Activated CD8-positive, alpha-beta T cell treated with anti-CD3 and anti-CD28 coated beads for 36 hours (primary cell): ENCODE measurements at regions of chr17 and their contacts with region 1.

Region 1: DNA sequence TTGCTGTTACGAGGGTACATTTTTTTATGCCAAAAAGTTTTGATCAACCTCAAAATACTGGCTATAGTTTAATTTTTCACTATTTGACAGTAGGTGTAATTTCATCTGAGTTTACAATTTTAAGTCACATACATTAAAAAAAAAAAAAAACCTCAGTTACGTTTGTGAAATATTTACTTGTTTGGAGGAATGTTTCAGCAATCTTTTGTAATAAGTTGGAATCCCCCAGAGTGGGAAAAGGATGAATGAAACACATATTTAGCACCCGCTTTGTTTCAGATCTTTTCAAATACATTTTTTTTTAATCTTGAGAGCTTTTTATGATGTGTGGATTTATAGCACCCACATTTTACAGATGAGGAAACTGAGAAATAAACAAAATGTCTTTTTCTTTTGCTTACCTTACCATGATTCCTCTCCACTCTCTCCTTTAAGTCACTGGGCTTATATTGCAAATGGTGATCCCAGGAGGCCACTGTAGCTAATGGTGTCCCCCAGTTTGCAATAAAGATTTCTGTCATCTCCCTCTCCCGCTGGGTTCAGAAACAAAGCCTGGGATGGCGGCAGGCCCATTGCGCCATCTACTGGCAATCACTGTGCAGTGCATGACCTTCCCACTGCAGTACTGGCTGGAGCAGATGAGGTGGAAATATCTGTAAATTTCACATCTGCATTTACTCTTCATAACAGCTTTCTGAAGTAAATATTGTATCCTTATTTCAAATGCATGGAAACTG is 27.7 kb downstream of the TBC1D3B start:
- DNase-seq: peak; percentile 76
- ATAC-seq: peak; percentile 97
- H3K4me3 Mint-ChIP-seq: peak overlapping the region; percentile 35
- H3K27ac Mint-ChIP-seq: no peak overlapping the region
- H3K4me1 Mint-ChIP-seq: peaks cover 37% of the 10 kb centered on the region
- H3K27me3 Mint-ChIP-seq: peaks cover 10% of the 10 kb centered on the region
- CTCF ChIP-seq: peak; percentile 100

Region 2: GRCh38 chr17:35596530-35597233 is 552.0 kb before region 1 on chr17:
- CTCF ChIA-PET with region 1: no interaction called
- POLR2A ChIA-PET with region 1: no interaction called
- intact Hi-C with region 1: no loop called
- DNase-seq: no peak
- ATAC-seq: no peak
- H3K4me3 Mint-ChIP-seq: no peak overlapping the region
- H3K27ac Mint-ChIP-seq: no peak overlapping the region
- H3K4me1 Mint-ChIP-seq: peaks cover 6% of the 10 kb centered on the region
- H3K27me3 Mint-ChIP-seq: no peaks in the 10 kb centered on the region
- CTCF ChIP-seq: no peak

Region 3: DNA sequence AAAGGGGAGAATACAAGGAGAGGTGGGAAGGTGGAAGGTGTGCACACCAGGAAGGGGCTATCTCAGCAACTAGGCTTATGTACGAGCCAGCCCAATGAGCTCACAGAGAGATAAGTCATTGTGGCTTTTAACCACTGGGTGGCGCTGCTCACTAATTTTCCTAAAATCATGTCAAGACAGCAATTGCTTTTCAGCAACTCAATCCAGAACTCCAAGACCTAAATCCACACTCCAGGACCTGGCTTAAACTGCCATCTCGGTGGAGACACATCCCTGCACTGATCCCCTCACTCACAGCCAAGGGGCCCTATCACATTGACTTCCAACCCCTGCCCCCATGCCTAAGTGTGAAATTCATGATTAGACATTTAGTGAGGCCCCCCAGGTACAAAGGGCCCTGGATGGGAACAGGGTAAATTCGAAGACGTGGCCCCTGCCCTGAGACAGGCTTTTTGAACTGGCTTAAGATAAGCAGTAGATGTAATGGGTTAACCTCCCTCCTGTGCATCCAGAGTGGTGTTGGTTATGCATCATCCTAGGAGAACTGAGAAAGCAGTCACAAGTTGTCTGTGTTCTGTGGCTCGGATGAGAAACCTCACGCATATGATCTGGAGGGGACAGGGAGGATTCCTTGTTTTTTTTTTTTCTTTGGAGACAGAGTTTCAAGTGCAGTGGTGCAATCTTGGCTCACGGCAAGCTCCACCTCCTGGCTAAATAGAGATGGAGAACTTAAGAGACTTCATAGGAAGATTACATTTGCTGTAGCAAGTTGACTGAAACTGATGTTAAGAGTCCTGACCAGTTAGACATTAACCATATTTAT is 179.0 kb before region 1 on chr17:
- CTCF ChIA-PET with region 1: interaction called, 299 read pairs
- POLR2A ChIA-PET with region 1: no interaction called
- intact Hi-C with region 1: loop called (anchors 2 kb)
- DNase-seq: peak; percentile 89
- ATAC-seq: peak; percentile 81
- H3K4me3 Mint-ChIP-seq: no peak overlapping the region
- H3K27ac Mint-ChIP-seq: no peak overlapping the region
- H3K4me1 Mint-ChIP-seq: no peaks in the 10 kb centered on the region
- H3K27me3 Mint-ChIP-seq: no peaks in the 10 kb centered on the region
- CTCF ChIP-seq: peak; percentile 85

Region 4: DNA sequence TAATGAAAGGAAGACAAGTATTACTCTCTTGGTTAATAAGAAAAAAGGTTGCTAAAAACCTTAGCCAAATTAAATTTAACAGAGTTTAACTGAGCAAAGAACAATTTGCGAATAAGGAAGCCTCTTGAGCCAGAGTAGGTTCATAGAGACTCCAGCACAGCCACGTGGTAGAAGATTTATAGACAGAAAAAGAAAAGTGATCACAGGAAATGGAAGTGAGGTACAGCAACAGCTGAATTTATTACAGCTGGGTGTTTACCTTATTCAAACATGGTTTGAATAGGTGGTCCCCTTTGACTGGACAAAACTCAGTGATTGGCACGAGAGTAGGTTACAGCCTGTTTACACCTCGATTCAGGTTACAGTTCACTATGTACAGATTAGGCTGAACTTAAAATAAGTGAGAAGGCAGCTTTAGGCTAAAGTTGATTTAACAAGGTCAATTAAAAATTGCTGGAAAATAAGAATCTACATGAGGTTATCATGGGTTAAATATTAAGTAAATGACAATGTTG is 144.1 kb before region 1 on chr17:
- CTCF ChIA-PET with region 1: interaction called, 11 read pairs
- POLR2A ChIA-PET with region 1: no interaction called
- intact Hi-C with region 1: no loop called
- DNase-seq: no peak
- ATAC-seq: no peak
- H3K4me3 Mint-ChIP-seq: no peak overlapping the region
- H3K27ac Mint-ChIP-seq: no peak overlapping the region
- H3K4me1 Mint-ChIP-seq: peaks cover 8% of the 10 kb centered on the region
- H3K27me3 Mint-ChIP-seq: no peaks in the 10 kb centered on the region
- CTCF ChIP-seq: no peak

Region 5: DNA sequence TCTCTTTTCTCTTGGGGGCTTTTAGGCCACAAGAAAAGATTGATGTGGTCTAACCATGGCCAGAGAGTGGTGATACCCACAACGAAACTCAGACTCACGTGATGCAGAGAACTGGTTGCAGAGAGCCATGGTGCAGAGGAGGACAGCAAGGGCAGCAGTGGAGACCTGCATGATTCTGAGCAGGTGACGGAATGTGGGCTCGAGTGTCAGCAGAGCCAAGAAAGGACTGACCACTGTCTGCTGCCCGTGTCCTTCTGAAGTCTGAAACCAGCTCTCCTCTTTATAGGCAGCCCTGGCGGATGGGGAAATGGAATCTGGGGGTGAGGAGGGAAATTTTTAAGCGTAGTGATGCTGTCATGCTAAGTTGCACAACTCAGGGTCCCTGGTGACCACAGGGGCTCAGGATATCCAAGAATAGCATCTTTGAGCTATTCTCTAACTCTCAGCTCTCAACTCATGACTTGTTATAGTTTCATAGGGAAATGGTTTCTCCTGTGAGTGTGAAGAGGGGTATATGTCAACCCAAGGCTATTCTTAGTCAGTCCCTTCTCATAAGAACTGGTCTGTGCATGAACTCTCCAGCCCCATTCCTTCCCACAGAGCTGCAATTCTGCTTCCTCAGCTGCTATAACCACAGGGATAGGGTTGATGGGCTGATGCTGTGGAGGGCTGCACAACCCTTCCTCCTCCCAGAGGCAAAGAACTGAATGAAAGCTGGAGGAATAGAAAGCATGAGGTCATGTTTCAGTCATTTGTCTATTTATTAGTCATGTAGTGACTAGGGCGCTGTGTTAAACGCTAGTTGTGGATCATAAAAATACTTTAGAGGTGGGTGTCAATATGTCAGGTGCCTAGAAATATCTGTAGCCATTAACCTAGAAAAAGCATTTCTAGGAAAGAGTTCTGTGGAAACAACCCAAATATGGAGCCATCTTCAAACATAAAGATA is 58.6 kb before region 1 on chr17 and contains the start of gene CCL3:
- CTCF ChIA-PET with region 1: interaction called, 5 read pairs
- POLR2A ChIA-PET with region 1: interaction called, 12 read pairs
- intact Hi-C with region 1: no loop called
- DNase-seq: peak; percentile 80
- ATAC-seq: peak; percentile 70
- H3K4me3 Mint-ChIP-seq: peak within 1 kb of the TSS; percentile 70
- H3K27ac Mint-ChIP-seq: peak within 1 kb of the TSS; percentile 95
- H3K4me1 Mint-ChIP-seq: peaks cover 66% of the 10 kb centered on the region
- H3K27me3 Mint-ChIP-seq: peaks cover 6% of the 10 kb centered on the region
- CTCF ChIP-seq: no peak
- total RNA-seq, gene CCL3: 230 to 253 TPM

Region 6: GRCh38 chr17:36111068-36111490 is 37.6 kb before region 1 on chr17:
- CTCF ChIA-PET with region 1: interaction called, 10 read pairs
- POLR2A ChIA-PET with region 1: no interaction called
- intact Hi-C with region 1: no loop called
- DNase-seq: no peak
- ATAC-seq: no peak
- H3K4me3 Mint-ChIP-seq: no peak overlapping the region
- H3K27ac Mint-ChIP-seq: no peak overlapping the region
- H3K4me1 Mint-ChIP-seq: peaks cover 15% of the 10 kb centered on the region
- H3K27me3 Mint-ChIP-seq: no peaks in the 10 kb centered on the region
- CTCF ChIP-seq: no peak

Region 7: GRCh38 chr17:36127199-36127893 is 21.4 kb before region 1 on chr17:
- CTCF ChIA-PET with region 1: interaction called, 24 read pairs
- POLR2A ChIA-PET with region 1: no interaction called
- intact Hi-C with region 1: no loop called
- DNase-seq: peak; percentile 18
- ATAC-seq: peak; percentile 56
- H3K4me3 Mint-ChIP-seq: no peak overlapping the region
- H3K27ac Mint-ChIP-seq: no peak overlapping the region
- H3K4me1 Mint-ChIP-seq: peaks cover 16% of the 10 kb centered on the region
- H3K27me3 Mint-ChIP-seq: peaks cover 2% of the 10 kb centered on the region
- CTCF ChIP-seq: no peak

Region 8: GRCh38 chr17:36212966-36213365 is 64.2 kb after region 1 on chr17:
- CTCF ChIA-PET with region 1: no interaction called
- POLR2A ChIA-PET with region 1: no interaction called
- intact Hi-C with region 1: no loop called
- DNase-seq: no peak
- ATAC-seq: no peak
- H3K4me3 Mint-ChIP-seq: peak overlapping the region; percentile 75
- H3K27ac Mint-ChIP-seq: peak overlapping the region; percentile 30
- H3K4me1 Mint-ChIP-seq: peaks cover 14% of the 10 kb centered on the region
- H3K27me3 Mint-ChIP-seq: peaks cover 10% of the 10 kb centered on the region
- CTCF ChIP-seq: no peak

Region 9: GRCh38 chr17:36503456-36504155 is 354.9 kb after region 1 on chr17:
- CTCF ChIA-PET with region 1: no interaction called
- POLR2A ChIA-PET with region 1: no interaction called
- intact Hi-C with region 1: no loop called
- DNase-seq: no peak
- ATAC-seq: no peak
- H3K4me3 Mint-ChIP-seq: no peak overlapping the region
- H3K27ac Mint-ChIP-seq: peak overlapping the region; percentile 54
- H3K4me1 Mint-ChIP-seq: peaks cover 6% of the 10 kb centered on the region
- H3K27me3 Mint-ChIP-seq: no peaks in the 10 kb centered on the region
- CTCF ChIP-seq: no peak